ENCODE measurements at regions of chr12 and their contacts with region 1.

Region 1: DNA sequence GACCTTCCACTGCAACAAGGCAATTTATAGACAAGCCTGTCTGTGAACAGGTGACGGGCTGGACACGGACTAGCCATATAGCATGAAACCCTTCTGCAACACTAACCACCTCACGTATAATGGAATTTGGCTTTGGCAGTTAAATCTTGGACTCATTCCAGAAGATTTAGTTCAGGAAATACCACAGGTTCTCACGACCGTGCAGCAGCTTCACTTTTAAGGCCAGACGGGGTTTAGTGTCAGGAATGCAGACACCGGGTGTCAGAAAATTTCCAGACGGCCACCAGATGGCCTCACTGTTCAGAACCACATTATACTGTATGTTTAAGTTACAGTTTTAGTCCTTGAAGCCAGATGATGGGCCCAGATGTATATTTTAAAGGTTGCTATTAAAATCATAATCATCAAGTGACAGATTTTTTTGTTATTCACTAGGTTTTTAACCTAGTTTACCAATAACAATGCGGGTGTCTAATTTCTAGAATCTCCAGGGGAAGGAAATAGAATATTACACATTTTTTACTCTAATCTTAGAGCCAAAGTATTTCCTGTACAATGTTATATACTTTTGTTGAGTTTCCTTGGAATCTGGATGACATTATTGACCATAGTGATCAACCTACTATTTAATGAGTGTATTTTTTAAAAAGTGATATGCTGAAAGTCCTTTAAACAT is 90.5 kb upstream of the TMPO start:
- DNase-seq: peak; percentile 83 to 91
- H3K4me3 ChIP-seq: no peak overlapping the region
- H3K27ac ChIP-seq: 0 out of 2 replicates have a peak overlapping the region, but pooled peaks have one; percentile 16
- H3K4me1 ChIP-seq: peaks cover 6% of the 10 kb centered on the region
- H3K27me3 ChIP-seq: no peaks in the 10 kb centered on the region
- CTCF ChIP-seq: peak; percentile 78

Region 2: DNA sequence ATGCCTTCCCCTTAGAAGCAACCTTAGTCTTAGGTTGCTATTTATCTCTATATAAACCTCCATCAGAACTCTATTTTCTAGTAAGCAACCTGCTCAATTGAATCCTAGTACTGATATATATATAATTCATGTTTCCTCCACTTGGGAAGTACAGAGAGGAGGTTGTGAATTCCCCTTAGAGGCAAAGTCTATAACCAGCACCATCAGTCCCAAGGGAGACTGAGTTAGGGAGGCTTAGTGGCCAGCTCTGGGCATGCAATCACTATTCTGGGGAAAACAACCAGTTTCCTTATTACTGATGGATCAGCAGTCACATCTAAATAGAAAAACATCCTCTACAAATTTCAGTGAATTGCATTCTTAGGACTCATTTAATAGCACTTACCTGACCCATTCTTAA is 473.1 kb before region 1 on chr12:
- CTCF ChIA-PET with region 1: no interaction called
- POLR2A ChIA-PET with region 1: no interaction called
- intact Hi-C with region 1: no loop called
- DNase-seq: no peak
- H3K4me3 ChIP-seq: no peak overlapping the region
- H3K27ac ChIP-seq: no peak overlapping the region
- H3K4me1 ChIP-seq: no peaks in the 10 kb centered on the region
- H3K27me3 ChIP-seq: no peaks in the 10 kb centered on the region
- CTCF ChIP-seq: no peak

Region 3: GRCh38 chr12:98397316-98398105 is 27.4 kb before region 1 on chr12:
- CTCF ChIA-PET with region 1: no interaction called
- POLR2A ChIA-PET with region 1: no interaction called
- intact Hi-C with region 1: no loop called
- DNase-seq: peak; percentile 71 to 79
- H3K4me3 ChIP-seq: peak overlapping the region; percentile 63
- H3K27ac ChIP-seq: no peak overlapping the region
- H3K4me1 ChIP-seq: peaks cover 29% of the 10 kb centered on the region
- H3K27me3 ChIP-seq: 0 out of 2 replicates have a peak, but pooled peaks cover 5% of the 10 kb centered on the region
- CTCF ChIP-seq: peak; percentile 93

Region 4: DNA sequence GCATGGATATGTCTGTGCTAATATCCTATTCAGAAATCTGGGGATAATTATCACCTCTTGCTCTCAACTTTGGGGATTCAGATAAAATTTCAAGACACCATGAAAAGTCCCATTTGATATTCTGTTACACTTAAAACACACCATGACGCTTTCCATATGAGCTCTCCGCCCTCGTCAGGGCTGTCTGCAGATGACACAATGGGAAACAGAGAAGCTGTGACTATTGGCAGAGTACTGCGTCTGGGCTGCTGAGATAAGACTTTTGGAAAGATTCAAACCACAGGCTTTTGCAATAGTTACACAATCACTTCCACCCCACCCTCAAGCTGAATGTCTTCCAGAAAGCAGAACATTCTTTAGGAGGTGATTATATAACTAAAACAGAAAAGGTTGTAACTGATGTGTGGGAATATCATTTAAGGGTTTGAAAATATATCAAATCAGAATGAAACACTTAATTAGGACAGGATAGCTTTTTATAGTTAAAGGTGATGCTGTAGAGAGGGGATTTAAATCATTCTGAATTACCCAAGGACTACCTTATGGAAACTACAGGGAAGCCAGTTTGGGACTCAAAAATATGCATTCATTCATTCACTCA is 15.2 kb after region 1 on chr12:
- CTCF ChIA-PET with region 1: interaction called, 4 read pairs
- POLR2A ChIA-PET with region 1: interaction called, 5 read pairs
- intact Hi-C with region 1: loop called (anchors 2 kb)
- DNase-seq: peak; percentile 65 to 88
- H3K4me3 ChIP-seq: no peak overlapping the region
- H3K27ac ChIP-seq: no peak overlapping the region
- H3K4me1 ChIP-seq: peaks cover 8% of the 10 kb centered on the region
- H3K27me3 ChIP-seq: no peaks in the 10 kb centered on the region
- CTCF ChIP-seq: no peak

Region 5: GRCh38 chr12:98464190-98464589 is 39.3 kb after region 1 on chr12:
- CTCF ChIA-PET with region 1: no interaction called
- POLR2A ChIA-PET with region 1: no interaction called
- intact Hi-C with region 1: no loop called
- DNase-seq: peak in 1 of 2 experiments; percentile 40
- H3K4me3 ChIP-seq: no peak overlapping the region
- H3K27ac ChIP-seq: no peak overlapping the region
- H3K4me1 ChIP-seq: peaks cover 11% of the 10 kb centered on the region; the same call in 1 of the 2 replicates
- H3K27me3 ChIP-seq: no peaks in the 10 kb centered on the region
- CTCF ChIP-seq: no peak

Region 6: DNA sequence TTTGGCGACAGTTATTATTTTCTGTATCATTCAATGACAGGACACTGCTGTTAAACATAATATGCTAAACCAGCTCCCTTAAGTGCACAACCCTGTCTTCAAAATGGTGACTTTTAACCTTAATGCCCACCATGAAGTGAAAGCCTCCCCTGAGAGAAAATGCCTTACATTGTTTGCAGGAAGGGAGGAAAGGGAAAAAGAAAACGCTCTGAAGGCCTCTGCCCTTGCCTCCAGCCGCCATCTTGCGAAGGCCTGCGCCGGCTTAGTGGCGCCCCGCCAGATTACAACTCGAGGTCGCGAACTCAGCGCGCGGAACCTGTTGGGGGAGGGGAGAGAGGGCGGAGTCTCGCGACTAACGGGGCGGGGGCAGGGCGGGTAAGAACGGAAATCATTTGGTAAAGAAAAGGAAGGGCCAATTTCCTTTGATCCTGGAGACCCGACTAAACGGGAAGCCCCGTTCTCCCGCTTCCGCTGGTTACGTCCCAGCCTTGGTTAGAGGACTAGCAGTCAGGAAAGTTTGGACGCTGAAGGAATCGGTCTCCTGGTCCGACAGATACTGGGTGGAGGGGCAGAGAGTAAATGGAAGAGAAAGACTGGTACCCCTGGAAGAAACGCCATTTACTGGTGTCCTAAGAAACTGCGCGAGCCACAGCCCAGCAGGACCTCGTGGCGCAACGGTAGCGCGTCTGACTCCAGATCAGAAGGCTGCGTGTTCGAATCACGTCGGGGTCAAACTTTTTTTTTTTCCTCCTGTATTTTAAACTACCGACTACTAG is 78.9 kb after region 1 on chr12:
- CTCF ChIA-PET with region 1: interaction called, 6 read pairs
- POLR2A ChIA-PET with region 1: interaction called, 8 read pairs
- intact Hi-C with region 1: loop called (anchors 1 kb)
- DNase-seq: peak; percentile 73 to 88
- H3K4me3 ChIP-seq: peak overlapping the region; percentile 75
- H3K27ac ChIP-seq: peak overlapping the region; percentile 79
- H3K4me1 ChIP-seq: no peaks in the 10 kb centered on the region
- H3K27me3 ChIP-seq: no peaks in the 10 kb centered on the region
- CTCF ChIP-seq: no peak